PC-3 (cell line): ENCODE measurements at regions of chr20 and their contacts with region 1.

Region 1: GRCh38 chr20:49186535-49187329 is 1.4 kb downstream of the STAU1 start:
- DNase-seq: peak; percentile 76
- ATAC-seq: peak; percentile 23
- H3K4me3 ChIP-seq: peak overlapping the region; percentile 85
- H3K27ac ChIP-seq: peak overlapping the region; percentile 6; the same call in 1 of the 2 replicates
- H3K4me1 ChIP-seq: peaks cover 18% of the 10 kb centered on the region
- H3K27me3 ChIP-seq: no peaks in the 10 kb centered on the region
- CTCF ChIP-seq: no peak

Region 2: DNA sequence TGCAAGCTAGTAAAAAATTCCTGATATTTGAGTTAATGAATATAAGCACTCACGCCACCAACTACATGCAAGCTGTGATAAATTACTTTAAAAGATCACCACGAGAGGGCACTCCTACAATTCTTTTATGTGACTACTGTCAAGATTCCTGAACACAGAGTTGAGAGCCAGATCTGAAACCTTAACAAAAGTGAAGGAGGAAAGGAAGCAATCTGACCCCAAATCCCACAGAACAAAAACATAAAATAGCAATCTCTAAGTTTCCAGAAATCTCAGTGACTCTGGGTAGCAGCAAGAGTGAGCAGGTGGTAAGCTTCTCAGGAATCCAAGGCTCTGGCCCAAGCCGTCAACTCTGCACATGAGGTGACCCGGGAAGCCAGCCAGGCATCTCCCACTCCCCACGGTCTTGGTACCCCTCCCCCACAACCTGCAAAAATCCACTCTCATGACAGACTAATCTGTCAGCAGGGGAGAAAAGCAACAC is 53.7 kb before region 1 on chr20:
- CTCF ChIA-PET with region 1: no interaction called
- POLR2A ChIA-PET with region 1: no interaction called
- intact Hi-C with region 1: loop called (anchors 1 kb)
- DNase-seq: peak; percentile 90
- ATAC-seq: peak; percentile 88
- H3K4me3 ChIP-seq: no peak overlapping the region
- H3K27ac ChIP-seq: no peak overlapping the region
- H3K4me1 ChIP-seq: no peaks in the 10 kb centered on the region
- H3K27me3 ChIP-seq: no peaks in the 10 kb centered on the region
- CTCF ChIP-seq: peak; percentile 90

Region 3: GRCh38 chr20:49147296-49147695 is 39.4 kb before region 1 on chr20:
- CTCF ChIA-PET with region 1: no interaction called
- POLR2A ChIA-PET with region 1: no interaction called
- intact Hi-C with region 1: no loop called
- DNase-seq: no peak
- ATAC-seq: no peak
- H3K4me3 ChIP-seq: no peak overlapping the region
- H3K27ac ChIP-seq: no peak overlapping the region
- H3K4me1 ChIP-seq: no peaks in the 10 kb centered on the region
- H3K27me3 ChIP-seq: no peaks in the 10 kb centered on the region
- CTCF ChIP-seq: no peak

Region 4: GRCh38 chr20:49161428-49162152 is 25.1 kb before region 1 on chr20:
- CTCF ChIA-PET with region 1: no interaction called
- POLR2A ChIA-PET with region 1: no interaction called
- intact Hi-C with region 1: loop called (anchors 2 kb)
- DNase-seq: peak; percentile 69
- ATAC-seq: peak; percentile 91
- H3K4me3 ChIP-seq: no peak overlapping the region
- H3K27ac ChIP-seq: peak overlapping the region; percentile 62
- H3K4me1 ChIP-seq: peaks cover 15% of the 10 kb centered on the region
- H3K27me3 ChIP-seq: no peaks in the 10 kb centered on the region
- CTCF ChIP-seq: no peak

Region 5: DNA sequence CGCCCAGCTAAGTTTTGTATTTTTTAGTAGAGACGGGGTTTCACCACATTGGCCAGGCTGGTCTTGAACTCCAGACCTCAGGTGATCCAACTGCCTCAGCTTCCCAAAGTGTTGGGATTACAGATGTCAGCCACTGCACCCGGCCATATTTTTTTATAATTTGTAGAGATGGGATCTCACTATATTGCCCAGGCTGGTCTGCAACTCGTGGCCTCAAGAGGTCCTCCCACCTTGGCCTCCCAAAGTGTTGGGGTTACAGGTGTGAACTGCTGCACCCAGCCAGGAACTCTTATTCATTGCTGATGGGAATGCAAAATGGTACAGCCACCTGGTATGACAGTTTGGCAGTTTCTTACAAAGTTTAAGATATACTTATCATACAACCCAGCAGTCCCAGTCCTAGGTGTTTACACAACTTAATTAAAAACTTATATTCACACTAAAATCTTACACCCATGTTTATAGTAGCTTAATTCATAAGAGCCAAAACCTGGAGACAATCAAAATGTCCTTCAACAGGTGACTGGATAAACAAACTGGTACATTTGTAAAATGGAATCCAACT is 13.1 kb after region 1 on chr20:
- CTCF ChIA-PET with region 1: no interaction called
- POLR2A ChIA-PET with region 1: no interaction called
- intact Hi-C with region 1: no loop called
- DNase-seq: no peak
- ATAC-seq: no peak
- H3K4me3 ChIP-seq: no peak overlapping the region
- H3K27ac ChIP-seq: no peak overlapping the region
- H3K4me1 ChIP-seq: no peaks in the 10 kb centered on the region
- H3K27me3 ChIP-seq: no peaks in the 10 kb centered on the region
- CTCF ChIP-seq: no peak

Region 6: DNA sequence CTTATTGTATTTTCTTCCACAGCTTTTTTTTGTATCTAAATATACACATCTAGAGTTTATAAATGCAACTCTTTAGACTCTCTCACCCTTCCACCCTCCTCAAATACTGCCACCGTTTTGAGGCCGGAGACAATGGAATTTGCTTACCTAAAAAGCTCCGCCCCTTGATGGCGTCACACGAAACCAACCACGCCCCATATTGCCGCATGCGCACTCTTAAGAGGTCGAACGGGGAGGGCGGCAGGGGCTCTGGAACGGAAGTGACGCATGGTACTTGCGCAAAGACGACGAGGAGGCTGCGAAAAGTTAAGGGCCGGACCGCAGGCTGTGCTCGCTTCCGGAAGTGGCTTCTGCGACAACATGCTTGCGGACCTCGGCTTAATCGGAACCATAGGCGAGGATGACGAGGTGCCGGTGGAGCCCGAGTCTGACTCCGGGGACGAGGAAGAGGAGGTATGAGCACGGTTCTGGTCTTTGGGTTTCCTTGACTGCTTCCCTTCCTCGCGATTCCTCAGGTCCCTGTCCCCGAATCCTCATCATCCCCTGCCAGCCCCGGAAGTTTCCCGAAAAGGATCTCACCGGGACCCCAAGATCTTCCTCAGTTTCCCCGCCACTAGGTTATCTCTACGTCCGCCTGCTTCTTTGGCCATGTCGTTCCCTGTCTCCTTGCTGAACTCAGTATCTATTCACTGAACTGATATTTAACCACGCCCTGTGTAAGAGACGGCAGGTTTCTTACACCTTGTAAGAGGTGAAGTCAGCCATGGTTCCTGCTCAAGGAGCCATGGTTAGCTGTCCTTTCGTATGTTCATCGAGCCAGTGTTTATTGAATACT is 32.6 kb after region 1 on chr20 and contains the start of gene DDX27:
- CTCF ChIA-PET with region 1: interaction called, 6 read pairs
- POLR2A ChIA-PET with region 1: interaction called, 4 read pairs
- intact Hi-C with region 1: loop called (anchors 2 kb)
- DNase-seq: peak; percentile 100
- ATAC-seq: peak; percentile 87
- H3K4me3 ChIP-seq: peak within 1 kb of the TSS; percentile 82
- H3K27ac ChIP-seq: peak within 1 kb of the TSS; percentile 45
- H3K4me1 ChIP-seq: peaks cover 15% of the 10 kb centered on the region
- H3K27me3 ChIP-seq: no peaks in the 10 kb centered on the region
- CTCF ChIP-seq: no peak
- total RNA-seq, gene DDX27: 80.8 and 97.3 TPM in 2 replicates

Region 7: DNA sequence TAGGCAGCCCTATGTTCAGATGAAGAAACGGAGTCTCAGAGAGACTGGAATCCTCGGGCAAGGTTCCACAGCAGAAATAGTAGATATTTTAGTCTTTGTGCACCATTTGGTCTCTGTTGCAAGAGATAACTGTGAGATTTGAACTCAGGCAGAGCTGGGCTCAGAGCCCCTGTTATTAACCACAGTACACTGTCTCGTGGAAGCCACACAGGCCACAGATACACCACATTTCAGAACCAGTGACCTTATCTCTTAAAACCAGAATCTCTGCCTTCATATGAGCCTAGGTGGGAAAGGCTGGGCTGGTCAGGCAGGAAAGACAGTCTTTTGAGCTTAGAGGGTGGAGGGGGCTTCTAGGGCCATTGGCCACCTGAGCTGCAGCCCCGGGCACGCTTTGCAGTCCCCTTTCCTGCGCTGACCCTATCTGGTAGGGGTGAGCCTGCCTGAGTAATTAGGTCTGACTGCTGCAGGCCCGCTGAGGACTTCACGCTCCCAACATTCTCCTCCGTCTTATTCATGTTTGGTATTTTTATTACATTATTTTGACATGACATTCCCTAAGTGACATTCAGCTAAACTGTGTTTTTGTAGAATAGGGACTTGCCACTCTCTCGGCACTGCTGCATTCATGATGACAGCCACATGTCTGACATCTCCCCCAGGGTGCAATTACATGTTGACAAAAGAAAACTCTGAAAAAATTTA is 224.6 kb after region 1 on chr20:
- CTCF ChIA-PET with region 1: no interaction called
- POLR2A ChIA-PET with region 1: no interaction called
- intact Hi-C with region 1: no loop called
- DNase-seq: no peak
- ATAC-seq: no peak
- H3K4me3 ChIP-seq: no peak overlapping the region
- H3K27ac ChIP-seq: no peak overlapping the region
- H3K4me1 ChIP-seq: no peaks in the 10 kb centered on the region
- H3K27me3 ChIP-seq: peaks cover 48% of the 10 kb centered on the region
- CTCF ChIP-seq: no peak